ENCODE measurements at regions of chr11 and their contacts with region 1.

Region 1: GRCh38 chr11:125923012-125923579 is 18.8 kb downstream of the DDX25 start:
- DNase-seq: peak; percentile 55
- ATAC-seq: peak; percentile 80 to 89

Region 2: DNA sequence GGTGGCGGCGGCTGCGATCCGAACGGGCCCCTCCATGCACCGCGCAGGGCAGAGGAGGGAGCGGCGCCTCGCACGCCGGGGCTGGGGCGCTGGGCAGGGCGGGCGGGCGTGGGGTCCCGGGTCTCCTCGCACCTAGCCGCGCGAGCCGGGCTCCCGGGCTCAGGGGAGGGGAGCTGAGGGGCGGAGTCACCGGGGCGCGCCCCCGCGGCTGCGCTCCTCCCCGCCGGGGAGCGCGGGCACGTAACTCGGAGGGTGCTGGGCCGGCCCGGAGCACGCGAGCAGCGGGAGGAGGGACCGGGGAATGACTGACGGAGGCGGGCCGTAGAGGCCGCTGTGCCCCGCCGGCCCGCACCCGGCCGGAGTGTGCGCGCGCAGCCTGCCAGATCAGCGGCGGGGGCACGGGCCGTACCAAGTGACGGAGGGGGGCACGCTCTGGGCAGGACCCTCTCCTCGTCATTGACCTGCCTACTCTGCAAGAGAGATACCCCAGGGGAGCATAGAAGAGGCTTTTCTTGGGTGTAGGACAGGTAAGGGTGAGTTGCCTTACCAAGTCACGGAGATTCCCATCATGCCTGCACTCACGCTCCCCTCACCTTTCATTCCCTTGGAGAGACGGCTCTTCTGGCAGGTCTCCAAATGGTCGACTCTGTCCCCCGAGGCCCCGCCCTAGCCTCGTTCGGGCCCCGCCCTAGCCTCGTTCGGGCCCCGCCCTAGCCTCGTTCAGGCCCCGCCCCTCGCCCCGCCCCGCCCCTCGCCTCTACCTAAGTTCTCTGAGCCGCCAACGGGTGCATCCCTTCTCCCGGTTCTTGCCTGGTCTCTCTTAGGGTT is 139.8 kb after region 1 on chr11 and contains the start of gene CDON:
- intact Hi-C with region 1: loop called in 1 of 2 experiments (anchors 5 kb)
- DNase-seq: peak; percentile 93
- ATAC-seq: peak; percentile 98 to 99
- total RNA-seq, gene CDON: 13.6 to 30.0 TPM